ENCODE measurements at regions of chr4 and their contacts with region 1.

Region 1: DNA sequence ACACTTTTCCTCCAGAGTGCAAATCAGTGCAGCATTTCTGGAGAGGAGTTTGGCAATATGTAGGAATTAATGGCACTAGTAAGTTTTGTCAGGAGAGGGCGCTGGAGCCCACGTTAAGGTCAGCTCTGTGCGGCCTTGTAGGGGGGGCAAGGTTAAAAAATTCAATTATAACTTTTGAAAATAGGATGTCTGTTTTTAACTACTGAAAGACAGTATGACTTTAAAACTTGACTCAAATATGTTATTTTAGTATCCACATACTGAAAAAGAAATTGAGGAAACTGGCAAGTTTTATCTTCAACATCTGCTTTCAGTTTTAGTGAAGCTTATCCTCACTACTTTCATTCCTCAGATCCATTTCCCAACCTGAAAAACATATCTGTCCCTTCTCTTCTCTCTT is 30.9 kb upstream of the HSD17B13 start:
- DNase-seq: peak; percentile 55
- ATAC-seq: peak; percentile 49
- H3K4me3 Mint-ChIP-seq: no peak overlapping the region
- H3K27ac Mint-ChIP-seq: no peak overlapping the region
- H3K4me1 Mint-ChIP-seq: no peaks in the 10 kb centered on the region
- H3K27me3 Mint-ChIP-seq: no peaks in the 10 kb centered on the region
- CTCF ChIP-seq: peak; percentile 67

Region 2: GRCh38 chr4:87339440-87339839 is 14.2 kb before region 1 on chr4:
- CTCF ChIA-PET with region 1: interaction called, 13 read pairs
- POLR2A ChIA-PET with region 1: no interaction called
- intact Hi-C with region 1: no loop called
- DNase-seq: no peak
- ATAC-seq: no peak
- H3K4me3 Mint-ChIP-seq: no peak overlapping the region
- H3K27ac Mint-ChIP-seq: no peak overlapping the region
- H3K4me1 Mint-ChIP-seq: no peaks in the 10 kb centered on the region
- H3K27me3 Mint-ChIP-seq: no peaks in the 10 kb centered on the region
- CTCF ChIP-seq: no peak

Region 3: GRCh38 chr4:87707279-87707918 is 353.8 kb after region 1 on chr4:
- CTCF ChIA-PET with region 1: no interaction called
- POLR2A ChIA-PET with region 1: no interaction called
- intact Hi-C with region 1: no loop called
- DNase-seq: no peak
- ATAC-seq: no peak
- H3K4me3 Mint-ChIP-seq: no peak overlapping the region
- H3K27ac Mint-ChIP-seq: no peak overlapping the region
- H3K4me1 Mint-ChIP-seq: no peaks in the 10 kb centered on the region
- H3K27me3 Mint-ChIP-seq: peaks cover 7% of the 10 kb centered on the region
- CTCF ChIP-seq: no peak